ENCODE measurements at regions of chr1 and their contacts with region 1.

Region 1: DNA sequence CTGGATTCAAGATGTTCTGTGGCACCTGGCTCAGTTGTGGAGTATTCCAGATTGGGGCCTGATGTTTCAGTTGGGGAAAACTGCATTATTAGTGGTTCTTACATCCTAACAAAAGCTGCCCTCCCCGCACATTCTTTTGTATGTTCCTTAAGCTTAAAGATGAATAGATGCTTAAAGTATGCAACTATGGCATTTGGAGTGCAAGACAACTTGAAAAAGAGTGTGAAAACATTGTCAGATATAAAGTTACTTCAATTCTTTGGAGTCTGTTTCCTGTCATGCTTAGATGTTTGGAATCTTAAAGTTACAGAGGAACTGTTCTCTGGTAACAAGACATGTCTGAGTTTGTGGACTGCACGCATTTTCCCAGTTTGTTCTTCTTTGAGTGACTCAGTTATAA is 7.2 kb downstream of the FPGT start:
- DNase-seq: no peak
- ATAC-seq: no peak

Region 2: DNA sequence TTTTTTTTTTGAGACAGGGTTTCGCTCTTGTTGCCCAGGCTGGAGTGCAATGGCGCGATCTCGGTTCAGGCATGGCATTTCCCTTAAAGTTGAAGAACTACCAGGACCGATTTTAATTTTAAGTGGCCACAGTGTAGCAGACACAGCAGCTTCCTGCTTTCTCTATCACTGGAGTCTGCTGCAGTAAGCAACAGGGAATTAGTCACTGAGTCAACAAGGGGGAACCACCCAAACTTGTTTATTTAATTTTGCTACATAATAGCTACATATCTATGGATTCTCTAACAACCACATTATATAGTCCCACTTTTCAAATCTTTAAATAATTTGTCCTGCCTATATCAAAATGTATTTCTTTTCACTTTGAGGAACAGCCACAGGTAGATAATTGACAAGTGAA is 17.4 kb after region 1 on chr1:
- intact Hi-C with region 1: loop called (anchors 1 kb)
- DNase-seq: no peak
- ATAC-seq: no peak

Region 3: GRCh38 chr1:75165264-75165663 is 960.0 kb after region 1 on chr1:
- intact Hi-C with region 1: loop called (anchors 10 kb)
- DNase-seq: no peak
- ATAC-seq: no peak